Right lobe of liver (tissue), 6 donors: ENCODE measurements at regions of chr14 and their contacts with region 1.

Region 1: DNA sequence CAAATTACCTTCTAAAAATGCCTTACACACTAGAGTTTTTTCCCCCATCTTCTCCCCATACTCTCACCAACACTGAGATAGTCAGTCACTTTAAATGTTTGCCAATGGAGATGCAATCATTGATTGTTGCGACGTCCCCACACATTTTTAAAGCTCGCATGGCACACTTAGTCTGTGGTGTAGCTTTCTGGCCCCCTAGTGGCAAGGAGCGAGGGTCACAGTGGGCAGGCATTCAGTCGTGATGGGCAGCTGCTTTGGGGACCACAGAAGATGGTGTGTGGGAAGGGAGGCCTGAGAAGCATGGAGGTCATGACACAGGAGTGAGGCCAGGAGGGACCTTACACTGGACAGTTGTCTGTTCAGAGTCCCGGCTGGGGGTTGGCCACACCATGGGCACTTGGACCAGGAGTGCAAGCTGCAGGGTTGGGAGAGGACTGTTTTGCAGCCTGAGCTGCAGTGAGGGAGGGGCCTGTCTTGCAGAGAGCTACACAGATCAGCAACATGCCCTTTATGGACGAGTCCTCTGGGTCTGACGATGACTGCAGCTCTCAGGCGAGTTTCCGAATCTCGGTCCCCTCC is 28.7 kb downstream of the PIGH start:
- DNase-seq: peak in 2 of 3 donors; percentile 59 to 66
- ATAC-seq: peak; percentile 80 to 92 (median 87)
- H3K4me3 ChIP-seq: no peak overlapping the region
- H3K27ac ChIP-seq: no peak overlapping the region
- H3K4me1 ChIP-seq: peaks cover 0 to 3% (median 0%) of the 10 kb centered on the region in 4 donors
- H3K27me3 ChIP-seq: no peaks in the 10 kb centered on the region
- CTCF ChIP-seq: peak; percentile 75 to 84 (median 76)
- POLR2A ChIP-seq: no peak

Region 2: DNA sequence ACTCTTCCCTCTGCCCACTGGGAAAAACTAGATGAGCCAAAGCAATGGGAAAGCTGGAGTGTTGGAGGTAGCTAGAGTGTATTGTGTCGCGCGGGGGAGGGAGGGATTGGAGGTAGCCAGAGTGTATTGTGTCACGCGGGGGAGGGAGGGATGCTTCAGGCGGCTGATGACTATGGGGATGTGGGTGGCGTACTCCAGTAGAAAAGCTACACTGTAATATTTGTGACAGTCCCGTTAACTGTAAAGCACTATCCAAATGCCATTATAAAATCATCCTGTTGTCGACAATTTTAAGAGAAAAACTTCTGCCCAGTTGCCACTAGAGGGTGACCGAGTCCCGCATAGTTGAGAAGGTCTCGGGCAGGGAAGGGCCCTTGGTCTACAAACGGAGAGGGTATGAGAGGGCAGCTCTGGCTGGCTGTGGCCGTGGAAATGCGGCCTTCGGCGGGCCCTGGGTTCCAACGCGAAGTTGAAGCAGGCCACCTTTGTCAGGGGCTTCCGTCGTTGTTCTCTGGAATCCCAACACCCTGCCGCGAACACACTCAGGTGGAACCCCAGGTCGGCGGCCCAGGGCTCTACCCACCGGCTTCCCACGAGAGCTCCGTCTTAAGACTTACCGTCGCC is 144.3 kb before region 1 on chr14:
- intact Hi-C with region 1: loop called (anchors 5 to 10 kb)
- DNase-seq: peak; percentile 68 to 73 (median 69)
- ATAC-seq: peak; percentile 91 to 95 (median 93)
- H3K4me3 ChIP-seq: no peak overlapping the region
- H3K27ac ChIP-seq: no peak overlapping the region
- H3K4me1 ChIP-seq: no peaks in the 10 kb centered on the region
- H3K27me3 ChIP-seq: no peaks in the 10 kb centered on the region
- CTCF ChIP-seq: peak; percentile 72 to 78 (median 74)
- POLR2A ChIP-seq: no peak

Region 3: DNA sequence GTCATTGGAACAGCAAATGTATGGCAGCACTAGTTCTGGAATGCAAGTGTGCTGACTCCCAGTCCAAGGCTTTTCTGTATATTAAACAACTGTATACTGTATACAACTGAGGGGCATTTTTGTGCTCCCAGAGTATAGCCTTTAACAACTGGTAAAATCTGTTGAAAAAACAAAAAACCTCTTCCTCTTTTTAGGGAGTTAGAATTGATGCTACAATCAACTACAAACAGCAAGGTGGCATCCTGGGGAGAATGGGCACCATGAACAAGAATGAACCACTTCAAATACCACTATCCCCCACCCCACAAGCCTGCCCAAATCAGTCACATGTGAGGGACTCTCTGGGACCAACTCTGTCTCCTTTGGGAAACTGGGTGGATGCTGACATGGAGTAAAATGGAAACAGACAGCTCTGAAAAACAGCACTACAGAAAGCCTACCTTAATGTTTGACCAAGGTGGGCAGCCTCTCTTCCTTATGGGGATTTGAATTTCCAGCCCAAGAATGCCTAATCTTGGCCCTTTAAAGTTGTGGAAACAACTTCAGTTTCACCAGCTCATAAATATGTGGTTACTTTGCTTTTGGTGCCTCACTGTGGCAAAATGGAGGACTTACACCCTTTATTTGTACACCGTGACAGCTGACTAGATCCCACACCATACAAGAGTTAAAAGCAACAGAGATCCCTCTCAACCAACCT is 95.5 kb after region 1 on chr14:
- intact Hi-C with region 1: loop called in 1 of 2 experiments (anchors 10 kb)
- DNase-seq: no peak
- ATAC-seq: peak; percentile 80 to 94 (median 86)
- H3K4me3 ChIP-seq: no peak overlapping the region
- H3K27ac ChIP-seq: no peak overlapping the region
- H3K4me1 ChIP-seq: peaks cover 0 to 5% (median 0%) of the 10 kb centered on the region in 4 donors
- H3K27me3 ChIP-seq: no peaks in the 10 kb centered on the region
- CTCF ChIP-seq: peak; percentile 52 to 76 (median 58)
- POLR2A ChIP-seq: no peak

Region 4: GRCh38 chr14:67695394-67695949 is 124.1 kb after region 1 on chr14 and contains the start of gene RDH11:
- intact Hi-C with region 1: no loop called
- DNase-seq: peak; percentile 89 to 91 (median 89)
- ATAC-seq: peak; percentile 89 to 93 (median 92)
- H3K4me3 ChIP-seq: peak within 1 kb of the TSS; percentile 68 to 80 (median 79)
- H3K27ac ChIP-seq: peak within 1 kb of the TSS; percentile 68 to 91 (median 81)
- H3K4me1 ChIP-seq: peaks cover 0 to 6% (median 0%) of the 10 kb centered on the region in 4 donors
- H3K27me3 ChIP-seq: no peaks in the 10 kb centered on the region
- CTCF ChIP-seq: no peak
- POLR2A ChIP-seq: peak; percentile 79
- total RNA-seq, gene RDH11: 35.5 to 106 (median 83.4) TPM